ENCODE measurements at regions of chr5 and their contacts with region 1.

Region 1: DNA sequence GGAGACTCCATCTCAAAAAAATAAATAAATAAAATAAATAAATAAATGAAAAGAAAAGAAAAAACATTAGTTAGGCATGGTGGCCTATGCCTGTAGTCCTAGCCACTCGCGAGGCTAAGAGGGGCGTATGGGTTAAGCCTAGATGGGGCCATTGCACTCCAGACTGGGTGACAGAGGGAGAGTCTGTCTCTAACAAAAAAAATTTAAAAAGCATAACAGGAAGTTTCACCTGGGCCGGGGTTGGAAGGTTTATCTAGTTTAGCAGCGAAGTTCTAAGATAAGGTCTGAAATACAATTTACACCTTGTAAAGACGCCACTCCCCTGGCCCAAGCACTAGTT is 18.0 kb downstream of the ZMAT2 start:
- DNase-seq: no peak
- H3K4me3 ChIP-seq: no peak overlapping the region
- H3K27ac ChIP-seq: no peak overlapping the region
- H3K4me1 ChIP-seq: no peaks in the 10 kb centered on the region
- H3K27me3 ChIP-seq: no peaks in the 10 kb centered on the region
- CTCF ChIP-seq: no peak

Region 2: GRCh38 chr5:140362860-140363630 is 355.2 kb before region 1 on chr5:
- CTCF ChIA-PET with region 1: interaction called, 6 read pairs
- POLR2A ChIA-PET with region 1: no interaction called
- intact Hi-C with region 1: loop called (anchors 1 kb)
- DNase-seq: peak; percentile 79
- H3K4me3 ChIP-seq: peak overlapping the region; percentile 28
- H3K27ac ChIP-seq: no peak overlapping the region
- H3K4me1 ChIP-seq: no peaks in the 10 kb centered on the region
- H3K27me3 ChIP-seq: no peaks in the 10 kb centered on the region
- CTCF ChIP-seq: peak; percentile 98

Region 3: GRCh38 chr5:141605523-141606277 is 887.5 kb after region 1 on chr5:
- CTCF ChIA-PET with region 1: no interaction called
- POLR2A ChIA-PET with region 1: interaction called, 10 read pairs
- intact Hi-C with region 1: no loop called
- DNase-seq: no peak
- H3K4me3 ChIP-seq: no peak overlapping the region
- H3K27ac ChIP-seq: peak overlapping the region; percentile 5
- H3K4me1 ChIP-seq: peaks cover 20% of the 10 kb centered on the region
- H3K27me3 ChIP-seq: no peaks in the 10 kb centered on the region
- CTCF ChIP-seq: no peak

Measured in A673 (cell line).